ENCODE measurements at regions of chr2 and their contacts with region 1.

Region 1: GRCh38 chr2:196160101-196160500 is 11.3 kb downstream of the STK17B start:
- DNase-seq: peak; percentile 74
- H3K4me3 Mint-ChIP-seq: peak overlapping the region; percentile 74
- H3K27ac Mint-ChIP-seq: peak overlapping the region; percentile 80
- H3K4me1 Mint-ChIP-seq: peaks cover 71% of the 10 kb centered on the region
- H3K27me3 Mint-ChIP-seq: no peaks in the 10 kb centered on the region

Region 2: DNA sequence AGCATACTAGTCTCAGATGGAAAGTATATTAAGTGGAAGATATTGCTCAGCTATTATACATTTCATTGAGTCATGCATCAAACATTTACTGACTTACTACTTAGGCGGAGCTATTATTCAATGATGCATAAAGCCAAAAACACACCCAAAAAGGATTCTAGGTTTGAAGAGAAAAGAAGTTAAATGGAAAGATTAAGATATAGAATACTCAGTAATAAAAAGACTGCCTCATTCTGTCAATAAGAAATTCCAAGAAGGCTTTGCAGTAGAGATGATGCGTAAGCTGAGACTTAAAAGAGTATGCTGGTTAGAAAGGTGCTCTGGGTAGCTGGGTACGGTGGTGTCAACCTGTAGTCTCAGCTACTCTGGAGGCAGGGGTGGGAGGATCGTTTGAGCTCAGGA is 16.4 kb before region 1 on chr2:
- CTCF ChIA-PET with region 1: interaction called, 4 read pairs
- POLR2A ChIA-PET with region 1: interaction called, 130 read pairs
- DNase-seq: no peak
- H3K4me3 Mint-ChIP-seq: no peak overlapping the region
- H3K27ac Mint-ChIP-seq: peak overlapping the region; percentile 53
- H3K4me1 Mint-ChIP-seq: peaks cover 62% of the 10 kb centered on the region
- H3K27me3 Mint-ChIP-seq: no peaks in the 10 kb centered on the region

Region 3: DNA sequence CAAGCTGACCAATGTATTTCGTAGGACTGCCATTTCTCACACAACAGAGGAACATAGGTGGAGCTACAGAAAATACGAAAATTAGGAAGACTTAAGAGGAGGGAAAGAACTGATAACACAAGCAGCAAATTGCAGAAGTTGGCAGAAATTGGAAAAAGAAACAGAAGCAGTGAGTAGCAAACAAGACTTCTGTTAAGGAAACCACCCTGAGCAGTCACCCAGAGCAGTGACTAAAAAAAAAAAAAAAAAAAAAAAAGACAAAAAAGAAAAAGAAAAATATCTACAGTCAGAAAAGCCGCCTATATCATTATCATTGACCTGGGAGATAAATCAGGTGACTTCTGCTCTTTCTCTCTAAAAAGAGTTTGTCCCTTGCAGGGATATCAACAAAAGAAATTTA is 10.2 kb before region 1 on chr2:
- CTCF ChIA-PET with region 1: interaction called, 4 read pairs
- POLR2A ChIA-PET with region 1: interaction called, 130 read pairs
- DNase-seq: no peak
- H3K4me3 Mint-ChIP-seq: peak overlapping the region; percentile 13
- H3K27ac Mint-ChIP-seq: peak overlapping the region; percentile 37
- H3K4me1 Mint-ChIP-seq: peaks cover 77% of the 10 kb centered on the region
- H3K27me3 Mint-ChIP-seq: no peaks in the 10 kb centered on the region

Region 4: GRCh38 chr2:196233021-196233804 is 73.1 kb after region 1 on chr2:
- CTCF ChIA-PET with region 1: no interaction called
- POLR2A ChIA-PET with region 1: interaction called, 85 read pairs
- DNase-seq: no peak
- H3K4me3 Mint-ChIP-seq: no peak overlapping the region
- H3K27ac Mint-ChIP-seq: peak overlapping the region; percentile 85
- H3K4me1 Mint-ChIP-seq: peaks cover 91% of the 10 kb centered on the region
- H3K27me3 Mint-ChIP-seq: no peaks in the 10 kb centered on the region

Region 5: DNA sequence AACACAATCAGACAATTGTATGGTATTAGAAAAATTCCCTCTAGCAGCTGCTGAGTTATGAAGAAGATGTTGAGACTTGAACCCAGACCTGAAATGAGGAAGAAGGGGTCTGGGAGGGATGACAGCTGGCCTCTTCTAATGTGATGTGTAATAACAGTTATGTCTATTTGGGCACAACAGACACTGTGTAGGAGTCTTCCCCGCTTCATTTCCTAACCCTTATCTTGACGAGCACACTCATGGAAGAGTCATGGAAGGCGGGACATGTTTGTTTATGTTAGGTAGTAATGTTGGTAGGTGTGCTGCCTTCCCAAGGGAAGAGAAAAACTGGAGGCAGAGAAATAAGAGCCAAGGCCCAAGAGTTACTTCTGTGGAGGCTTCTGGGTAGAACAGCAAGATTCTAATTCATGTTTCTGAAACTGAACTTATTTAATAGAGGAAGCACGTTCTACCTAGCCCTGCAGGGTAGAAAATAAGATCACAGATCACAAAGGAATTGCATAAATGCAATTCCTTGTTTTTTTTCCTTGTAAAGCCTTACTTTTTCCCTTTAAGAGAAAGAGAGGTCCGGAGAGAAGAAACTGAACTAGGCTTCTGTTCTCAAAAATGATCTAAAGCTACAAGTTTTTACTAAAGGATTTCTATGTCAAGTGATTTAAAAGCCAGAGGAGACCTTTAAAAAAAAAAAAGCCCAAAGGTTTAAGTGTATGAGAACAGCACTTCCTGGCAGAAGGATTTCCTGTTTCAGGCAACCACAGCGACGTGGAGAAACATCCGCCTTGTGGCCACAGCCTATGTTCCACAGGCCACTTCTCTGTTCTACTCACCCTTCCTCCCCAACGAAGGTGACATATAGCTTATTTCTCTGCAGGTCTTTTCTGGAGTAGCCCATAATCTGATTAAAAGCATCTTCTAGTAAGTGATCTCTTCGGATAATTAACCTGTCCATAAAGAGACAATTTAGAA is 79.8 kb after region 1 on chr2:
- CTCF ChIA-PET with region 1: interaction called, 5 read pairs
- POLR2A ChIA-PET with region 1: interaction called, 85 read pairs
- DNase-seq: peak; percentile 93
- H3K4me3 Mint-ChIP-seq: peak overlapping the region; percentile 57
- H3K27ac Mint-ChIP-seq: peak overlapping the region; percentile 93
- H3K4me1 Mint-ChIP-seq: peaks cover 74% of the 10 kb centered on the region
- H3K27me3 Mint-ChIP-seq: no peaks in the 10 kb centered on the region

Region 6: DNA sequence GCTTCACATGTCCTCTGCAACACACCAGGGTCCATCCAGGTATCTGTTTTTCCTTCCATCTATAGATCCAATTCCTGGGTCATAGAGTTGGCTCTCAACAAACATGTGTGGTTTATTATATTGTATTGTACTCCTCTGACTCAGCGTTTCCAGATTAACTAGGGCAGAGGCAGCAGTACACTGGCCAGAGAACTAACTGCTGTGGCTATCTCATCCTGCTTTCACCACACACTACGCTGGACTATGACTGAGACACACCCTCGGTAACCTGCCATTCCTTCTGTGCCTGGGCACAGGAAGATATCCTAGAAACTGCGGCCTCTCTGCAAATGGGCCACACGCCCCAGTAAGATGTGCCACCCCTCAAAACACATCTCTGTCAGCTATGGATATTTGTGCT is 171.0 kb after region 1 on chr2:
- CTCF ChIA-PET with region 1: no interaction called
- POLR2A ChIA-PET with region 1: no interaction called
- DNase-seq: no peak
- H3K4me3 Mint-ChIP-seq: no peak overlapping the region
- H3K27ac Mint-ChIP-seq: no peak overlapping the region
- H3K4me1 Mint-ChIP-seq: peaks cover 5% of the 10 kb centered on the region
- H3K27me3 Mint-ChIP-seq: peaks cover 14% of the 10 kb centered on the region

Region 7: DNA sequence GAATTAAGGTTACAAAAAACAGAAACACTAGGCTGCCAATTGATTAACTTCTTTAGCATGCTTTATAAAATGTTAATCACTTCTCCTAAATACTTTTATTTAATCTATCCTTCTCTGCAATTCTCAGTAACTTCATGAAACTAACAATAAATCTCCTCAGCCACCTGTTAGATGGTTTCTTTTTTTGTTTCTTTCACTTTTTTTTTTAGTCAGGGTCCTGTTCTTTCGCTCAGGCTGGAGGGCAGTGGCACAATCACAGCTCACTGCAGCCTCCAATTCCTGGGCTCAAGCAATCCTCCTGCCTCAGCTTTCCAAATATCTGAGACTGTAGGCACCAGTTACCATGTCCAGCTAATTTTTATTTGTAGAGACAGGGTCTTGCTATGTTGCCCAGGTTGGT is 224.6 kb after region 1 on chr2:
- CTCF ChIA-PET with region 1: no interaction called
- POLR2A ChIA-PET with region 1: no interaction called
- DNase-seq: no peak
- H3K4me3 Mint-ChIP-seq: no peak overlapping the region
- H3K27ac Mint-ChIP-seq: no peak overlapping the region
- H3K4me1 Mint-ChIP-seq: no peaks in the 10 kb centered on the region
- H3K27me3 Mint-ChIP-seq: peaks cover 11% of the 10 kb centered on the region